ENCODE measurements at regions of chr7 and their contacts with region 1.

Region 1: DNA sequence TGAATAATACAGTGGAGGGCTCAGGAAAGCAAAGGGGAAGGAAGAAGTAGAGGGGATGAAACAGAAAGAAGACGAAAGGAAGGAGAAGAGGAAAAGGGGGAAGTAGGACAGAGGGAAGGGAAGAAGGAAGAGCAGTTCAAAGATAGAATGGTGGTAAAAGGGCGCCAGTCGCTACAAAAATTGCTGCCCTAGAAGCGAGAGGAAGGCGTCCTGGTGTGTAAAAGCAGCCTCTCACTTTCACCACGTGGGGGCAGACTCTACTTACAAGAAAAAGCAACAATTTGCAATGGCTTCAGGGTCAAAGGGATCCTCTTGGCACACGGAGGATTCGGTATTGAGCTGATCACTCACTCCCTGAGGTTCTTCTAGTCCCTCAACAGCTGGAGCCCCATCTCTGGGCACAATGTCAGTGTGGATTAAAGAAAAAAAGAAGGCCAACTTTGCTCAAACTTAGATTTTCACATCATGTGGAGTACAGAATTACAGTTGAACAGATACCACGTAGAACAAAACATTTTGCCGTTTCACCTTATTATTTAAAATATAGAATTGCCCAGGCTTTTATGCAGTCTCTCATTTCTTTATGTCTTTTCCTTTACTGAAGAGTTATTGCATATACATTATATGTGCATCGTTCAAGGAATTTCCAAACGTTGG is 31.4 kb upstream of the NPVF start:
- DNase-seq: peak; percentile 84
- H3K4me3 Mint-ChIP-seq: no peak overlapping the region
- H3K27ac Mint-ChIP-seq: peak overlapping the region; percentile 28
- H3K4me1 Mint-ChIP-seq: peaks cover 29% of the 10 kb centered on the region
- H3K27me3 Mint-ChIP-seq: peaks cover 5% of the 10 kb centered on the region

Region 2: GRCh38 chr7:25282194-25282593 is 22.5 kb after region 1 on chr7:
- CTCF ChIA-PET with region 1: no interaction called
- POLR2A ChIA-PET with region 1: no interaction called
- DNase-seq: no peak
- H3K4me3 Mint-ChIP-seq: no peak overlapping the region
- H3K27ac Mint-ChIP-seq: no peak overlapping the region
- H3K4me1 Mint-ChIP-seq: peaks cover 4% of the 10 kb centered on the region
- H3K27me3 Mint-ChIP-seq: peaks cover 7% of the 10 kb centered on the region

Region 3: GRCh38 chr7:25565949-25566348 is 306.2 kb after region 1 on chr7:
- CTCF ChIA-PET with region 1: interaction called, 22 read pairs
- POLR2A ChIA-PET with region 1: no interaction called
- DNase-seq: peak; percentile 73
- H3K4me3 Mint-ChIP-seq: no peak overlapping the region
- H3K27ac Mint-ChIP-seq: no peak overlapping the region
- H3K4me1 Mint-ChIP-seq: peaks cover 7% of the 10 kb centered on the region
- H3K27me3 Mint-ChIP-seq: no peaks in the 10 kb centered on the region

Region 4: GRCh38 chr7:25839084-25839769 is 579.5 kb after region 1 on chr7:
- CTCF ChIA-PET with region 1: no interaction called
- POLR2A ChIA-PET with region 1: no interaction called
- DNase-seq: no peak
- H3K4me3 Mint-ChIP-seq: no peak overlapping the region
- H3K27ac Mint-ChIP-seq: no peak overlapping the region
- H3K4me1 Mint-ChIP-seq: no peaks in the 10 kb centered on the region
- H3K27me3 Mint-ChIP-seq: peaks cover 16% of the 10 kb centered on the region

Measured in activated CD4-positive, alpha-beta T cell treated with anti-CD3 and anti-CD28 coated beads, Interleukin-2, amount 10 ng/mL, durations not matched to agents 7 days and 5 days (primary cell).